Natural killer cell (primary cell): ENCODE measurements at regions of chrX and their contacts with region 1.

Region 1: DNA sequence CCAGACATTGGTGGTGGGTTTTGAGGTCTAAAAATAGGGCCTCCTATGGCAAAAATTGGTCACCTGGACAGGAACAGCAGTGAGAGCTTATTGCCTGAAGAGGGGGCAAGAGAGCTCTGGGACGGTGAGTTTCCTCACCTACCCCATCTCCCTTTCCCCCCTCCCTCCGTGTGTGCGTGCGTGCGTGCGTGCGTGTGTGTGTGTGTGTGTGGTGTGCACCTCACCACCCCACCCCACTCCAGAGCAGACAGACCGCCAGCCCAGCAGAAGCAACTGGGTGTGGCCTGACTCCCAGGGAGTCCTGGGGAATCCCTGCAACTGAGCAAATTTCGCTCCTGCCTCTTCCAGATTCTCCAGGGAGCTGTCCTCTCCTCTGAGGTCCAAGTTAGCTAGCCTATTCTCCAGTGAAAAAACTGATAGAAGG is 44.7 kb downstream of the PRPS1 start:
- DNase-seq: peak; percentile 57 to 93
- ATAC-seq: peak; percentile 60 to 77 (median 67)
- H3K4me3 ChIP-seq: no peak overlapping the region
- H3K4me3 Mint-ChIP-seq: peak overlapping the region; percentile 81
- H3K27ac ChIP-seq: peak overlapping the region; percentile 100
- H3K27ac Mint-ChIP-seq: peak overlapping the region; percentile 90 to 95
- H3K4me1 ChIP-seq: peaks cover 47% of the 10 kb centered on the region
- H3K4me1 Mint-ChIP-seq: peaks cover 29 to 38% of the 10 kb centered on the region in 2 donors
- H3K27me3 ChIP-seq: no peaks in the 10 kb centered on the region
- H3K27me3 Mint-ChIP-seq: peaks cover 0 to 15% of the 10 kb centered on the region in 2 donors
- CTCF ChIP-seq: peak; percentile 58

Region 2: DNA sequence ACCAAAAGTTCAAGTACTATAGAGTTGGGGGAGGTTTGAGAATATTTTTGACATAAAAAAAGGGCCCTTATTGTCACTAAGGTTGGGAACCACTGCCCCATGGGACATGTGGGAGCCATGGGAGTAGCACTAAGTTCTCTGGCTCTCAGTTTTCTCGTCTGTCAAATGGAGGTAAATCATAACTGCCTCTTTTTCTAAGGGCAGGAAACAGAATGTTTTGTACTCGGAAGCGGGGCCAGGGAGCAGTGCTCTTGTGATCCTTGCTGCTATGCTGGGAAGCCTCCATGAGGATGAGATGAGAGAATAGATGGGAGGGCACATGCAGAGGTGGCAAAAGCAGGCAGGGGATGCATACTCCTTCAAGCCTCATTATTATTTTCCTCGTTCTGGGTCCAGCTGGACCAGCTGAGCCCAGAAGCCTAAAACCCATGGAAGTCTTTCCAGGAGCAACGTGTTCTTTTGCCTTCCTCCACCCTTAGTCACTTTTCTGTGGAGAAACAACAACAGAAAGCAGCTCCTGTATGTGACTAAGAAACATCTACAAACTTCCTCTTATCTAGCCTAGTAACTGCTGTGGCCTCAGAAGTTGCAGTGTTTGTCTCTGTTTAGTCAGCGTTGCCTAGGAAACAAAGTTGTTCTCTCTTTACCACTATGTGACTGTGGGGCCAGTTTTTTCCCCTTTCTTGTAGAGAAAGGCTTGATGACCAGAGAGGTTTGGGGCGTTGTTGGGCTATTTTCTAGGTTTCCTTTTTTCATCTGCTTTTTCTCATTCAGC is 37.8 kb after region 1 on chrX:
- intact Hi-C with region 1: loop called (anchors 1 kb)
- DNase-seq: peak; percentile 17 to 91
- ATAC-seq: peak; percentile 58 to 86 (median 72)
- H3K4me3 ChIP-seq: no peak overlapping the region
- H3K4me3 Mint-ChIP-seq: peak overlapping the region; percentile 92
- H3K27ac ChIP-seq: peak overlapping the region; percentile 100
- H3K27ac Mint-ChIP-seq: peak overlapping the region; percentile 99
- H3K4me1 ChIP-seq: peaks cover 59% of the 10 kb centered on the region
- H3K4me1 Mint-ChIP-seq: peaks cover 46 to 55% of the 10 kb centered on the region in 2 donors
- H3K27me3 ChIP-seq: no peaks in the 10 kb centered on the region
- H3K27me3 Mint-ChIP-seq: no peaks in the 10 kb centered on the region
- CTCF ChIP-seq: no peak

Region 3: GRCh38 chrX:107742700-107743191 is 69.8 kb after region 1 on chrX:
- intact Hi-C with region 1: loop called (anchors 1 kb)
- DNase-seq: no peak
- ATAC-seq: no peak
- H3K4me3 ChIP-seq: no peak overlapping the region
- H3K4me3 Mint-ChIP-seq: peak overlapping the region; percentile 85
- H3K27ac ChIP-seq: peak overlapping the region; percentile 62
- H3K27ac Mint-ChIP-seq: peak overlapping the region; percentile 91 to 94
- H3K4me1 ChIP-seq: peaks cover 29% of the 10 kb centered on the region
- H3K4me1 Mint-ChIP-seq: peaks cover 28 to 29% of the 10 kb centered on the region in 2 donors
- H3K27me3 ChIP-seq: no peaks in the 10 kb centered on the region
- H3K27me3 Mint-ChIP-seq: no peaks in the 10 kb centered on the region
- CTCF ChIP-seq: no peak